K562 (cell line): ENCODE measurements at regions of chr6 and their contacts with region 1.

Region 1: DNA sequence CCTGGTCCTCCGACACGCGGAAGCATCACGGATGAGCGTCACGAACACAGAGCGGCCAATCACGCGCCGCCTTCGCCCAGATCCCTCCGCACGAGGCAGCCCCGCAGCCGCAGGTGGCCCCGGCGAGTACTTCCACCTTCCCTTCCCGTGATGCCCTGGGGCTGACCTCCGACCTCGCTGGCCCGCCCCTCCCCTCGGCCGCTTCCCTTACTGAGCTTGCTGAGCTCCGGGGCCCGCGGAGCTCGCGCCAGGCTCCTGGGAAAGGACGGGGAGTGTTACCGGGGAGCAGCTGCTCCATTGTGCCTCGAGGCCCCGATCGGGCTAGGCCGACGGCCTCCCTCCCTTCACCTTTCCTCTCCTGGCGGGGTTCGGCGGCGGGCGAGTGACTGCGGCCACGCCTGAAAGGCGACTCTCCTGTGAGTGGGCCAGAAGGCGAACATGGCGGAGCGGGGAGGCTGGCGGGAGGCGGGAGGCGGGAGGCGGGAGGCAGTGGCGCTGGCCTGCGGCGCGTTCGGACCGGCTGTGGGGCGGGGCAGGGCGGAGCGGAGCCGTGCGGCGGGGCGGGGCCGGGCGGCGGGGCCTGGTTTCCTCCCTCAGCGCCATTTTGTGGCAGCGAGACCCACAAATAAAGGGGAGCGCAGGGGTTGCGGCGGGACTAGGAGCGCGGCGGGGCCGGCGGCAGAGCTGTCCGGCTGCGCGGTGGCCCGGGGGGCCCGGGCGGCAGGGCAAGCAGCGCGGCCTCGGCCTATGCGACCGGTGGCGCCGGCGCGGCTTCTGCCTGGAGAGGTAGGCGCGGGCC is at the start of gene WTAP:
- DNase-seq: peak; percentile 94 to 99 (median 95)
- ATAC-seq: peak; percentile 89
- H3K4me3 ChIP-seq: peak within 1 kb of the TSS; percentile 88
- H3K27ac ChIP-seq: peak within 1 kb of the TSS; percentile 98
- H3K4me1 ChIP-seq: peaks cover 6 to 10% of the 10 kb centered on the region in 2 experiments; a peak in 4 of 5 replicates
- H3K27me3 ChIP-seq: no peaks in the 10 kb centered on the region
- CTCF ChIP-seq: no peak
- EP300 ChIP-seq: no peak; the same call in none of the 2 replicates
- POLR2A ChIP-seq: peak; percentile 100
- RAD21 ChIP-seq: no peak
- polyA plus RNA-seq, gene WTAP: 73.9 to 115 TPM

Region 2: GRCh38 chr6:159582736-159583135 is 144.4 kb before region 1 on chr6:
- CTCF ChIA-PET with region 1: no interaction called
- POLR2A ChIA-PET with region 1: no interaction called
- in situ Hi-C with region 1: no loop called
- intact Hi-C with region 1: no loop called
- DNase-seq: no peak
- ATAC-seq: no peak
- H3K4me3 ChIP-seq: no peak overlapping the region
- H3K27ac ChIP-seq: no peak overlapping the region
- H3K4me1 ChIP-seq: no peaks in the 10 kb centered on the region
- H3K27me3 ChIP-seq: peaks cover 20 to 36% of the 10 kb centered on the region in 2 experiments; a peak in 3 of 5 replicates
- CTCF ChIP-seq: no peak
- EP300 ChIP-seq: no peak
- POLR2A ChIP-seq: no peak
- RAD21 ChIP-seq: no peak

Region 3: DNA sequence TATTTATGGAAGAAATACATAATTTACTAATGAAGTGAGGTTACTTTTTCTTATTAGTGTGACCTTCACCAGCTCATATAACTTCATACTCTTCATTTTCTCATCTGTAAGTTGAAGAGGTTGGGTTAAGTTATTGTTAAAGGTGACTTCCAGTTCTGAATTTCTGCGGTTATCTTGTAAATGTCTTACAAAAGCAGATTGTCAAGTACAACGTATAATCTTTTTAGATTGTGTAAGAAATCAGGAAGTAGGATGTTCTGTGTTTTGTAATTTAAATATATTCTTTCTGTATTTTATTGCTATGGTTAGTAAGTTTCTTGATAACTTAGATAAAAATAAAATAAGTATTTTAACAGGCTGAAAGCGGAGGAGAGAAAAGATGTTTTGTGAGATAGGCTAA is 12.2 kb after region 1 on chr6:
- CTCF ChIA-PET with region 1: no interaction called
- POLR2A ChIA-PET with region 1: interaction called, 28 read pairs
- in situ Hi-C with region 1: no loop called
- intact Hi-C with region 1: no loop called
- DNase-seq: no peak
- ATAC-seq: no peak
- H3K4me3 ChIP-seq: no peak overlapping the region
- H3K27ac ChIP-seq: no peak overlapping the region
- H3K4me1 ChIP-seq: peaks cover 0 to 3% of the 10 kb centered on the region in 2 experiments; a peak in 1 of 5 replicates
- H3K27me3 ChIP-seq: no peaks in the 10 kb centered on the region
- CTCF ChIP-seq: no peak
- EP300 ChIP-seq: no peak
- POLR2A ChIP-seq: no peak
- RAD21 ChIP-seq: no peak

Region 4: DNA sequence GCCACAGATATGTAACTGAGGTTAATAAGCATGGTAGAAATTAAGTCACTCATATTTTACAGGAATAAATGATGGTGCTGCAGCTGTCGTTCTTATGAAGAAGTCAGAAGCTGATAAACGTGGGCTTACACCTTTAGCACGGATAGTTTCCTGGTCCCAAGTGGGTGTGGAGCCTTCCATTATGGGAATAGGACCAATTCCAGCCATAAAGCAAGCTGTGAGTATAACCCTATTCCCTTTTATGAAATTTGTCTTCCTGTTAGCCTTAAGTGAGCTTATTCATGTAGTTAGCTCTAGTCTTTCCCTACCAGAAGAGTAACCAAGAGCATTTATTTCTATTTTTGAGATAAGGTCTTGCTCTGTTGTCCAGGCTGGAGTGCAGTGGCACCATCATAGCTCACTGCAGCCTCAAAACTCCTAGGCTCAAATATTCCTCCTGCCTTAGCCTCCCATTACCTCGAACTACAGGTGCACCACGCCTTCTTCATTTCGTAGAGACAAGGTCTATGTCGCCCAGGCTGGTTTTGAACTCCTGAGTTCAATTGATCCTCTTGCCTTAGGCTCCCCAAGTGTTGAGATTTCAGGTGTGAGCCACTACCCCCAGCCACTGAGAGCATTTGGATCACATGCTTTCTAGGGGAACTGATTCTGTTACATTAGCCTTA is 50.3 kb after region 1 on chr6:
- CTCF ChIA-PET with region 1: no interaction called
- POLR2A ChIA-PET with region 1: interaction called, 10 read pairs
- in situ Hi-C with region 1: no loop called
- intact Hi-C with region 1: no loop called
- DNase-seq: peak in 1 of 4 experiments; percentile 7
- ATAC-seq: peak; percentile 55
- H3K4me3 ChIP-seq: no peak overlapping the region
- H3K27ac ChIP-seq: no peak overlapping the region
- H3K4me1 ChIP-seq: no peaks in the 10 kb centered on the region
- H3K27me3 ChIP-seq: no peaks in the 10 kb centered on the region
- CTCF ChIP-seq: no peak
- EP300 ChIP-seq: no peak
- POLR2A ChIP-seq: peak; percentile 76
- RAD21 ChIP-seq: no peak